B cell (primary cell): ENCODE measurements at regions of chr1 and their contacts with region 1.

Region 1: DNA sequence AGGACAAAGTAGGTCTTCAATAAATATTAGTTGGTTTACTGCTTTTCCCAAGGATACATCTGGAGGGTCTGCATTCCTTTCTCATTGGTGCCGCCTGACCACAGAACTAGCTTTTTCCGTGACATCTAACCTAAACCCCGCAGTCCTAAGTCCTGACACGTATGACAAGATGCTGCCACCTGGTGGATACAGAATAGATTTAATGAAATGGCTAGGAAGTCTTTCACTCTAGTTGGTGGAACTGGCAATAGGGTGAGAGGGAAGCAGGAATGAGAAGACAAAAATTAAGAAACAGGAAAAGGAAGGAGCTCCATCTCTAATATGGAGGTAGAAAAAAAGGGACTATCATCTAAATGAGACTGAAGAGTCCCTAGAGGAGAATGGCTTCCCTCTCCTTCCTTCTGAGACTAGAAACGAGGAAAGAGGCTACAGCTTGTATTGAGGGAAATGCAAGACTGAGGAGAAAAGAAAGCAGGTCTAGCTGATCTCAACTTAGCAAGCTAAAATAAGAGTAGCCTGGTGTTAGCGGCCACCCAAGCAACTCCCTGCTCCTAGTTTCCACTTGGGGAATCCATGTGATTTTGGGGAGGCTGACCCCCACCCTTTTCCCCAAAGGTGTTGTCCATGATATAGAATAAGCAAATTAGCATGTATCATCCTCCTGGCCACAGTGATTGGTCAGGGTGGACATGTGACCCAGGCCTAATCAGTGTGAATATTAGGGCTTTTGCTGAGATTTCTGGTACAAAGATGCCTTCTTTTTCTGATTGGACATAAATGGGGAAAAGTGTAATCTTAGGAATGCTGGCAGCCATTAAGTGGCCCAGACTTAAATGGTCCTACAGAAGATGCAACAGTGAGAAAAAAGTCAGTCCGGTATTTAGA is 5.9 kb downstream of the RFX5 start:
- DNase-seq: peak; percentile 82
- ATAC-seq: peak; percentile 83
- H3K4me3 ChIP-seq: no peak overlapping the region
- H3K4me3 Mint-ChIP-seq: no peak overlapping the region
- H3K27ac ChIP-seq: peak overlapping the region; percentile 21 to 99
- H3K27ac Mint-ChIP-seq: peak overlapping the region; percentile 69
- H3K4me1 ChIP-seq: peaks cover 25% of the 10 kb centered on the region in 2 donors
- H3K4me1 Mint-ChIP-seq: peaks cover 38% of the 10 kb centered on the region
- H3K27me3 ChIP-seq: no peaks in the 10 kb centered on the region
- H3K27me3 Mint-ChIP-seq: no peaks in the 10 kb centered on the region
- CTCF ChIP-seq: peak; percentile 85

Region 2: GRCh38 chr1:151106894-151107293 is 234.2 kb before region 1 on chr1:
- CTCF ChIA-PET with region 1: interaction called, 23 read pairs
- POLR2A ChIA-PET with region 1: no interaction called
- intact Hi-C with region 1: no loop called
- DNase-seq: no peak
- ATAC-seq: no peak
- H3K4me3 ChIP-seq: no peak overlapping the region
- H3K4me3 Mint-ChIP-seq: no peak overlapping the region
- H3K27ac ChIP-seq: no peak overlapping the region
- H3K27ac Mint-ChIP-seq: no peak overlapping the region
- H3K4me1 ChIP-seq: no peaks in the 10 kb centered on the region
- H3K4me1 Mint-ChIP-seq: no peaks in the 10 kb centered on the region
- H3K27me3 ChIP-seq: no peaks in the 10 kb centered on the region
- H3K27me3 Mint-ChIP-seq: no peaks in the 10 kb centered on the region
- CTCF ChIP-seq: no peak

Region 3: DNA sequence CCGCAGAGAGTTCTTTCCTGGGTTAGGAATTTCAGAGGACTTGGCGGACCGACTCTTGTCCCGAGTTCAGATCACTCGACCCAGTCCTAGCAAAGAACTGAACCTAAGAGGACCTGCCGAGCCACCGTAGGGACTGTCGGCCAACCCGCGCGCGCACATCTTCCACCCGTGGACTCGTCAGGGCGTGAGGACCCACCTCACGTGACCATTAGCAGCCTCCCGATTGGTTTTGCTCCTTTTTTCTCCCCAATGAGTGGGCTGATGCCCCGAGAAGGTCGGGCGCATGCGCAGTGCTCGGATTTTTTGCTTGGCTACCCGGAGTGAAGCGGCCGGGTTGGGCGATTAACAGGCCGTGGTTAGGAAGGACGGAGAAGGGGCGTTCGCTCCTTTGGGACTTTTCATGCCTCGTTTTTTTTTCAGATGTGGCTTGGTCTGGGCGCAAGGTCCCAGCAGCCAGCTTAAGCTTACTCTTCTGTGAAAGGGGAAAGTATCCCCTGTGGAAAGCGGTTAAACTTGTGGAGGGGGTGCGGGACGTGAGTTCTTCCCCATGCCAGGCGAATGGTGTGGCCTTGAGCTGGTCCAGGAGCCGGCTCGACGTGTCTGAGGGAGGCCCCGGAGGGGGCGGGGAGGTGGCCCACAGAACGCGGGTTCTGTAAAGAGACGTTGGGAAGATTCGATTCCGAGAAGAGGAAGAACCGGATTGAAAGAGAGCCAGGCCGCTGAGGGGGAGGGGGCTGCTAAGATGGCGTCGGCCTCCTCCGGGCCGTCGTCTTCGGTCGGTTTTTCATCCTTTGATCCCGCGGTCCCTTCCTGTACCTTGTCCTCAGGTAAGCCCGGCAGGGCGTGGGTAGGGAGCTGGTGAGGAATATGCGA is 142.6 kb before region 1 on chr1 and contains the start of gene PIP5K1A:
- CTCF ChIA-PET with region 1: interaction called, 8 read pairs
- POLR2A ChIA-PET with region 1: no interaction called
- intact Hi-C with region 1: loop called (anchors 2 kb)
- DNase-seq: peak; percentile 98
- ATAC-seq: peak; percentile 98
- H3K4me3 ChIP-seq: peak within 1 kb of the TSS; percentile 82 to 96 (median 95)
- H3K4me3 Mint-ChIP-seq: peak within 1 kb of the TSS; percentile 98
- H3K27ac ChIP-seq: peak within 1 kb of the TSS; percentile 87 to 90
- H3K27ac Mint-ChIP-seq: peak within 1 kb of the TSS; percentile 94
- H3K4me1 ChIP-seq: peaks cover 21 to 29% of the 10 kb centered on the region in 2 donors
- H3K4me1 Mint-ChIP-seq: peaks cover 47% of the 10 kb centered on the region
- H3K27me3 ChIP-seq: peaks cover 0 to 2% (median 0%) of the 10 kb centered on the region in 4 experiments
- H3K27me3 Mint-ChIP-seq: no peaks in the 10 kb centered on the region
- CTCF ChIP-seq: no peak
- total RNA-seq, gene PIP5K1A: 76.1 and 78.4 TPM in 2 replicates

Region 4: GRCh38 chr1:151311589-151312331 is 29.4 kb before region 1 on chr1:
- CTCF ChIA-PET with region 1: interaction called, 239 read pairs
- POLR2A ChIA-PET with region 1: no interaction called
- intact Hi-C with region 1: no loop called
- DNase-seq: no peak
- ATAC-seq: peak; percentile 56
- H3K4me3 ChIP-seq: no peak overlapping the region
- H3K4me3 Mint-ChIP-seq: no peak overlapping the region
- H3K27ac ChIP-seq: no peak overlapping the region
- H3K27ac Mint-ChIP-seq: peak overlapping the region; percentile 75
- H3K4me1 ChIP-seq: no peaks in the 10 kb centered on the region
- H3K4me1 Mint-ChIP-seq: peaks cover 18% of the 10 kb centered on the region
- H3K27me3 ChIP-seq: no peaks in the 10 kb centered on the region
- H3K27me3 Mint-ChIP-seq: no peaks in the 10 kb centered on the region
- CTCF ChIP-seq: no peak

Region 5: GRCh38 chr1:151327223-151327902 is 13.7 kb before region 1 on chr1 and contains the start of gene PI4KB:
- CTCF ChIA-PET with region 1: interaction called, 148 read pairs
- POLR2A ChIA-PET with region 1: interaction called, 7 read pairs
- intact Hi-C with region 1: loop called (anchors 1 kb)
- DNase-seq: peak; percentile 97
- ATAC-seq: peak; percentile 93
- H3K4me3 ChIP-seq: peak within 1 kb of the TSS; percentile 72 to 99 (median 90)
- H3K4me3 Mint-ChIP-seq: peak within 1 kb of the TSS; percentile 93
- H3K27ac ChIP-seq: peak within 1 kb of the TSS; percentile 87 to 89
- H3K27ac Mint-ChIP-seq: peak within 1 kb of the TSS; percentile 96
- H3K4me1 ChIP-seq: peaks cover 21 to 26% of the 10 kb centered on the region in 2 donors
- H3K4me1 Mint-ChIP-seq: peaks cover 40% of the 10 kb centered on the region
- H3K27me3 ChIP-seq: no peaks in the 10 kb centered on the region
- H3K27me3 Mint-ChIP-seq: no peaks in the 10 kb centered on the region
- CTCF ChIP-seq: no peak
- total RNA-seq, gene PI4KB: 110 TPM in 2 replicates

Region 6: DNA sequence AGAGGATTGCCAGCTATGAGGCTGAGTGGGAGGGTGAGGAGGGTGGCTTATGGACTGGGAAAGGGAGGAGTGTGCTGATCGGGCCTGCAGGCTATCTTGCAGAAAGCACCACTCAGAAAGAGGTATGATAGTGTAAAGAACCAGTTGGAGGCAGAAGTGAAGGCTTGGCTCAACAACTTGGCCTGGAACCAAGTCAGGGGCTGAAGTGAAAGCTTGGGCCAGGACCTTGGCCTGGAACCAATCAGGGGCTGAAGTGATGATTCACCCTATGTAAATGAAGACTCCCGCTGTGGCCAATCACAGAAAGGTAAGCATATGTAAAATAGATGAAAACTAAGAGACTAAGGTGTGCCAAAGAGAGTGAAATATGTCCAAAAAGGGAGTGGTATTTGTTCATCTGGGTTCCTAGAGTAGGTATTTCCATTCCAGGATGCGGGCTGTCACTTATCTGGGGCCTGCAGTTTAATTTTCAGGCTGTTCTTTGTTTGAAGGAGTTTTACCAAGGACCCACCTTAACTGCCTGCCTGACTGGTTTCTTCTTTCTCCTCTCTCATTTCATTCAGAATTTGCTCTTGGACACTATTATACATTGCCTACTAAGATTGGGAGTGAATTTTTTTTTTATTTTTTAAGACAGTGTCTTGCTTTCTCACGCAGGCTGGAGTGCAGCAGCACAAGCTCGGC is 11.0 kb after region 1 on chr1:
- CTCF ChIA-PET with region 1: interaction called, 24 read pairs
- POLR2A ChIA-PET with region 1: no interaction called
- intact Hi-C with region 1: no loop called
- DNase-seq: no peak
- ATAC-seq: no peak
- H3K4me3 ChIP-seq: no peak overlapping the region
- H3K4me3 Mint-ChIP-seq: no peak overlapping the region
- H3K27ac ChIP-seq: no peak overlapping the region
- H3K27ac Mint-ChIP-seq: no peak overlapping the region
- H3K4me1 ChIP-seq: peaks cover 10 to 14% of the 10 kb centered on the region in 2 donors
- H3K4me1 Mint-ChIP-seq: peaks cover 13% of the 10 kb centered on the region
- H3K27me3 ChIP-seq: no peaks in the 10 kb centered on the region
- H3K27me3 Mint-ChIP-seq: no peaks in the 10 kb centered on the region
- CTCF ChIP-seq: no peak

Region 7: GRCh38 chr1:151416231-151416904 is 75.3 kb after region 1 on chr1:
- CTCF ChIA-PET with region 1: no interaction called
- POLR2A ChIA-PET with region 1: interaction called, 11 read pairs
- intact Hi-C with region 1: no loop called
- DNase-seq: no peak
- ATAC-seq: no peak
- H3K4me3 ChIP-seq: no peak overlapping the region
- H3K4me3 Mint-ChIP-seq: no peak overlapping the region
- H3K27ac ChIP-seq: no peak overlapping the region
- H3K27ac Mint-ChIP-seq: no peak overlapping the region
- H3K4me1 ChIP-seq: no peaks in the 10 kb centered on the region
- H3K4me1 Mint-ChIP-seq: no peaks in the 10 kb centered on the region
- H3K27me3 ChIP-seq: no peaks in the 10 kb centered on the region
- H3K27me3 Mint-ChIP-seq: no peaks in the 10 kb centered on the region
- CTCF ChIP-seq: no peak